A549 (cell line): ENCODE measurements at regions of chr11 and their contacts with region 1.

Region 1: DNA sequence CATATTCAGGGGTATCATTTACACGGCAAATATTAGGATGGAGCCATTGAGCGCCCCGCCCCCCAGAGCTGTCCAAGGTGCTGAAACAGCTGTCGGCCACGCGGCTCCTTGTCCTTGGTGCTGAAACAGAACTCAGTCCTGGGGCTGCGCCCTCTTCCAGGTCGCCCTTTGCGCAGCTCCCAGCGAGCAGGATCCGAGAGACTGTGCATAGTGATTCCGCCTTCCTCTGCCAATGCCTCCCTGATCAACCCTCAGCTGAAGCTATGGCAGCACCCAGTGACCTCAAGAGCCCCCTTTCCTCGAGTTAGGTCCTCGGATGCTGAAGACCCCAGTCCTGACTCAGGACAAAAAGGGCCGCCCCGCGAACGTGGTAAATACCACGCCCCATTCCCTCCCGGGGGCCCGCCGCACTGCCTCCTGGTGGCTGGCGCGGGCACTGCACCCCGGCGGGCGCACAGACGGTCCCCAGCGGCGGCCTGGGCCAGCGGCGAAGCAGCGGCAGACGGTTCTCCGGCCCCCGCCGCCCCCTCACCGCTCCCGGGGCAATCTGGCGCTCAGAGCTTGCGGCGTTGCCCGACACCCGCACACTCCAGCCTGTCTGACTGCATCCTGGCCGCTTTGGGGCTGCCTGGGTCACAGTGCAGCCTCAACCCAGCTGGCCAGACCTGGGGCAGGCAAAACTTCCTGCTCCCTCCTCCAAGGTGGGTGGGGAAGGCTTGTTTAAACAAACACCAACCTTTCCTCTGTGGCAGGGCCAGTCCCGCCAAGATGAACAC is 13.4 kb downstream of the SYT7 start:
- DNase-seq: peak; percentile 87 to 92
- ATAC-seq: peak; percentile 73 to 92
- H3K4me3 ChIP-seq: peak overlapping the region; percentile 31; the same call in 1 of the 3 replicates
- H3K27ac ChIP-seq: no peak overlapping the region
- H3K4me1 ChIP-seq: peaks cover 5% of the 10 kb centered on the region; the same call in 1 of the 3 replicates
- CTCF ChIP-seq: peak; percentile 72
- EP300 ChIP-seq: no peak
- POLR2A ChIP-seq: no peak
- RAD21 ChIP-seq: peak; percentile 26 to 35; a peak in 3 of 5 replicates

Region 2: GRCh38 chr11:61541598-61541997 is 25.9 kb before region 1 on chr11:
- CTCF ChIA-PET with region 1: interaction called, 56 read pairs
- POLR2A ChIA-PET with region 1: no interaction called
- DNase-seq: peak; percentile 26 to 36
- ATAC-seq: peak; percentile 16 to 52; a peak in 3 of 6 replicates
- H3K4me3 ChIP-seq: no peak overlapping the region
- H3K27ac ChIP-seq: peak overlapping the region in 1 of 2 experiments; percentile 75; a peak in 3 of 6 replicates
- H3K4me1 ChIP-seq: peaks cover 35% of the 10 kb centered on the region
- CTCF ChIP-seq: no peak
- EP300 ChIP-seq: no peak
- POLR2A ChIP-seq: no peak
- RAD21 ChIP-seq: no peak

Region 3: GRCh38 chr11:61555051-61555969 is 12.2 kb before region 1 on chr11:
- CTCF ChIA-PET with region 1: interaction called, 19 read pairs
- POLR2A ChIA-PET with region 1: no interaction called
- DNase-seq: peak in 1 of 2 experiments; percentile 35
- ATAC-seq: peak; percentile 4 to 56; a peak in 3 of 6 replicates
- H3K4me3 ChIP-seq: 0 out of 3 replicates have a peak overlapping the region, but pooled peaks have one; percentile 2
- H3K27ac ChIP-seq: no peak overlapping the region
- H3K4me1 ChIP-seq: peaks cover 14% of the 10 kb centered on the region
- CTCF ChIP-seq: no peak
- EP300 ChIP-seq: no peak
- POLR2A ChIP-seq: no peak
- RAD21 ChIP-seq: no peak

Region 4: DNA sequence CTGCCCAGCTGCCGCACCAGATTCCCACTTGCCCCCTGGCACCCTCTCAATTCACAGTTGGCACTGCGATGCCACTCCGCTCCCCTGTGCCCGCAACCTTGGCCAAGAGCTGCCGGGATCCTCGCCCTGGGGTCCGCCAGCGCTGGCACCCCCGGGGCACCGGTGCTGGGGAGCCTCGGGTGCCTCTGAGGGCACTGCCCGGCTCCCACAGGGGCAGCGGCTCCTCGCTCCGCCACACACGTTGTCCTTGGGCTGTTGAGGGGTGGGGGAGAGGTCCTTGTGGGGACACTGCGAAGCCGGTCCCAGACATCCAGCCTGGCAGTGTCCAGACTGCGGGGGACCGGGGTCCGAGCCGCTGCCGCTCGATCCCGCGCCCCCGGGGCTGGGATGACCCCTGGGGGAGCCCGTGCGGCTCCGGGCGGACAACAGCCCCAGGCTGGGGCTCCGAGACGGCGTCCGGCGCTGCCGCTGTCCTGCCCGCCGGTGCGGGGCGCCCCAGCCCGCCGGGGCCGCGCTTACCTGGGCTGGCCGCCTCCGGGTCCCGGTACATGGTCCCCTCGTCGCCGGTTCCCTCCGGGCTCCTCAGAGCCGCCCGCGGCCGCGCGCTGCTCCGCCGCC is 12.9 kb after region 1 on chr11:
- CTCF ChIA-PET with region 1: interaction called, 50 read pairs
- POLR2A ChIA-PET with region 1: no interaction called
- DNase-seq: peak in 1 of 2 experiments; percentile 39
- ATAC-seq: peak; percentile 14 to 25; a peak in 4 of 6 replicates
- H3K4me3 ChIP-seq: peak overlapping the region; percentile 57
- H3K27ac ChIP-seq: peak overlapping the region; percentile 61 to 91
- H3K4me1 ChIP-seq: peaks cover 13% of the 10 kb centered on the region; the same call in 2 of the 3 replicates
- CTCF ChIP-seq: no peak; the same call in 1 of the 3 replicates
- EP300 ChIP-seq: no peak
- POLR2A ChIP-seq: no peak
- RAD21 ChIP-seq: no peak

Region 5: DNA sequence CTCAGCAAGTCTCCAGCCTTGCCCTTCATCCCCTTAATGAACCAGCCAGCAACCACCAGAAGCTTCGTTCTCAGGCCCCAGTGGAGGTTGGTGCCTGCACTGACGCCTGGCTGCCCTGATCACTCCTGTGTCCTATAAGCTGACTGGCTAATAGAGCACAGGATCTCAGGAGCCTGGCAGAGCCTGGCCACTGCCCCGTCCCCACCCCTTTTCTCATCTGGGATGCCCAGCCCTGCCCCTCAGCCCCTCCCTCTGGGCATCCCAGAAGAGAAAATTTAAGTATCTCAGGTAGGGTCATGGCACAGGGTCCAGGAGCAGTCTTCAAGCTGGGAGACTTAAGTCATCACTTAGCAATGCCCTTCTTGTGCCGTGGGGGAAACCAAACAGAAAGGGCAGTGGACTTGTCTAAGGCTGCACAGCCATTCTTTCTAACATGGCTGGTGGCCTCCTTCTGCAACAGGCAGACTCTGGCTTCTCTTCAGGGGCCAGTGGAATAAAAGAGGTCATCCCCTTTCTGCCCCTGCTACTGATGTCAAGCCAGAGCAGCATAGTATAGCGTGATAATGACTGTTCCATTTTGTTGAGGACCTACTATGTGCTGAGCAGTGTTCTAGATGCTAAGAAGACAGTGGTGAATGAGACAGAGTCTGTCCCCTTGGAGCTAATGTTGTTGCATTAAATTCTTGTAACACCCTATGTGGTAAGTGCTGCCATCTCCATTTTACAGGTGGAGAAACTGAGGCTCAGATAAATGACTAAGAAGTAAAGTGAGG is 28.9 kb after region 1 on chr11:
- CTCF ChIA-PET with region 1: no interaction called
- POLR2A ChIA-PET with region 1: no interaction called
- DNase-seq: no peak
- ATAC-seq: peak in 1 of 2 experiments; percentile 16; a peak in 2 of 6 replicates
- H3K4me3 ChIP-seq: no peak overlapping the region
- H3K27ac ChIP-seq: no peak overlapping the region
- H3K4me1 ChIP-seq: no peaks in the 10 kb centered on the region
- CTCF ChIP-seq: no peak
- EP300 ChIP-seq: no peak
- POLR2A ChIP-seq: no peak
- RAD21 ChIP-seq: no peak